Esophagus squamous epithelium (tissue), 5 donors: ENCODE measurements at regions of chr3 and their contacts with region 1.

Region 1: GRCh38 chr3:12484198-12484974 is at the start of gene TSEN2:
- DNase-seq: peak; percentile 51
- H3K4me3 ChIP-seq: peak within 1 kb of the TSS; percentile 71 to 81 (median 76)
- H3K27ac ChIP-seq: peak within 1 kb of the TSS; percentile 70 to 89 (median 80)
- H3K4me1 ChIP-seq: peaks cover 5 to 37% (median 20%) of the 10 kb centered on the region in 3 donors
- H3K27me3 ChIP-seq: no peaks in the 10 kb centered on the region
- CTCF ChIP-seq: peak in 4 of 6 experiments; percentile 6 to 73 (median 20)
- POLR2A ChIP-seq: peak in 3 of 4 donors; percentile 62 to 98 (median 94)
- total RNA-seq, gene TSEN2: 13.6 to 29.6 (median 14.3) TPM

Region 2: GRCh38 chr3:12135029-12135657 is 349.2 kb before region 1 on chr3:
- intact Hi-C with region 1: loop called (anchors 5 kb)
- DNase-seq: no peak
- H3K4me3 ChIP-seq: no peak overlapping the region
- H3K27ac ChIP-seq: no peak overlapping the region
- H3K4me1 ChIP-seq: peaks cover 0 to 8% (median 0%) of the 10 kb centered on the region in 3 donors
- H3K27me3 ChIP-seq: peaks cover 0 to 20% (median 0%) of the 10 kb centered on the region in 4 donors
- CTCF ChIP-seq: peak; percentile 43 to 91 (median 86)
- POLR2A ChIP-seq: no peak

Region 3: GRCh38 chr3:12287727-12288191 is 196.6 kb before region 1 on chr3:
- intact Hi-C with region 1: loop called (anchors 10 kb)
- DNase-seq: no peak
- H3K4me3 ChIP-seq: peak overlapping the region; percentile 70 to 87 (median 76)
- H3K27ac ChIP-seq: peak overlapping the region; percentile 77 to 87 (median 84)
- H3K4me1 ChIP-seq: peaks cover 4 to 42% (median 6%) of the 10 kb centered on the region in 3 donors
- H3K27me3 ChIP-seq: peaks cover 0 to 35% (median 2%) of the 10 kb centered on the region in 4 donors
- CTCF ChIP-seq: no peak
- POLR2A ChIP-seq: no peak

Region 4: DNA sequence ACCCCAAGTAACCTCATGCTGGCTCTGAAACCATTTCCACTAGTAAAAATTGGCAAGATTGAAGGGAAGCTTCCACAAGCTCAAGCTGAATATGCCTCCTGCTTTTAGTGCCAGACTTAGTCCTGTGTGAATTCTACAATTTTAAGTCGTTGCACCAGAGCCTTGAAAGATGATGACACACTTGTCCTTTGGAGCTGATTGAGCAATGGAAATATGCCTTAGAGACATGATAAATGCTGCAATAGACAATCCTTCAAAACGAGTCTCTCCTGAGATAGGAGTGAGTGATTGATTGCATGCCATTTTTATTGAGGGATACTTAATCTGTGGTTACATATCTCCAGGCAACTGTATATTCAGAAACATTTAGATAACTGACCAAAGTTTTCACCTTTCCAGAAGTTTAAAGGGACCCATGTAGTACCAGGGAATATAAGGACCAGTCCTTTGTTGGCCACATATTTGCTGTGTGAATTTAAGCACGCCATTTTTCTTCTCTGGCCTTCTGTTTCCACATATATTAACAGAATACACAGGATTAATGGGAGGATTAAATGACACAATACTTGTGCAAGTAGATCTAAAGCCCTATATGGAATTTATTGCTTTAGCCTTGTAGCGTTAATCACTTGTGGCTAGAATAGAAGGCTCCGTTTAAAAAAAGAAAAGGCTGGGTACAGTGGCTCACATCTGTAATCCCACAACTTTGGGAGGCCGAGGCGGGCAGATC is 130.4 kb before region 1 on chr3:
- intact Hi-C with region 1: no loop called
- DNase-seq: no peak
- H3K4me3 ChIP-seq: no peak overlapping the region
- H3K27ac ChIP-seq: no peak overlapping the region
- H3K4me1 ChIP-seq: peaks cover 0 to 27% (median 6%) of the 10 kb centered on the region in 3 donors
- H3K27me3 ChIP-seq: no peaks in the 10 kb centered on the region
- CTCF ChIP-seq: no peak
- POLR2A ChIP-seq: no peak

Region 5: GRCh38 chr3:12613250-12613649 is 128.9 kb after region 1 on chr3:
- intact Hi-C with region 1: no loop called
- DNase-seq: no peak
- H3K4me3 ChIP-seq: no peak overlapping the region
- H3K27ac ChIP-seq: no peak overlapping the region
- H3K4me1 ChIP-seq: no peaks in the 10 kb centered on the region
- H3K27me3 ChIP-seq: no peaks in the 10 kb centered on the region
- CTCF ChIP-seq: no peak
- POLR2A ChIP-seq: no peak

Region 6: GRCh38 chr3:12730506-12731242 is 246.3 kb after region 1 on chr3:
- intact Hi-C with region 1: no loop called
- DNase-seq: no peak
- H3K4me3 ChIP-seq: no peak overlapping the region
- H3K27ac ChIP-seq: no peak overlapping the region
- H3K4me1 ChIP-seq: peaks cover 0 to 7% (median 0%) of the 10 kb centered on the region in 3 donors
- H3K27me3 ChIP-seq: no peaks in the 10 kb centered on the region
- CTCF ChIP-seq: no peak
- POLR2A ChIP-seq: no peak